ENCODE measurements at regions of chr20 and their contacts with region 1.

Region 1: DNA sequence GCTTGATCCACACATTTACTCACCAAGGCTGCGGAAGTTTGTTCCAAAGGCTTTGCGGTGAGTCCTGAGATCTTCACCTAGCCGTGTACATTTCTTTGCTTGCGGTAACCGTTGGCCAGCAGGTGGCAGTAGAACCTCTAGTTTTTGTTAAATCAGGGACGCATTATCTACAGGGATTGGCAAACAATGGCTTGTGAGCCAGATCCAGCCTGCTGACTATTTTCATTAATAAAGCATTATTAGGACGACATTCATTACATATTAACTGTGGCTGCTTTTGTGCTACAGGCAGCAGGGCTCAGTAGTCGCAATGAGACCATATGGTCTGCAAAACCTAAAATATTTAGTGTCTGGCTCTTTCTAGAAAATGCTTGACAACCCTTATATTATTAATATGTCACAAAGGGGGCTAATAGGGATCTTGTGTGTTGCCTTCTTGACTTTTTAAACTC is 174.1 kb downstream of the DOK5 start:
- DNase-seq: peak; percentile 1
- H3K4me3 ChIP-seq: no peak overlapping the region
- H3K27me3 ChIP-seq: no peaks in the 10 kb centered on the region
- CTCF ChIP-seq: peak; percentile 89

Region 2: GRCh38 chr20:54199721-54200176 is 449.8 kb before region 1 on chr20:
- CTCF ChIA-PET with region 1: interaction called, 12 read pairs
- POLR2A ChIA-PET with region 1: no interaction called
- DNase-seq: no peak
- H3K4me3 ChIP-seq: no peak overlapping the region
- H3K27me3 ChIP-seq: peaks cover under 1% of the 10 kb centered on the region; the same call in 1 of the 2 replicates
- CTCF ChIP-seq: peak; percentile 96

Region 3: DNA sequence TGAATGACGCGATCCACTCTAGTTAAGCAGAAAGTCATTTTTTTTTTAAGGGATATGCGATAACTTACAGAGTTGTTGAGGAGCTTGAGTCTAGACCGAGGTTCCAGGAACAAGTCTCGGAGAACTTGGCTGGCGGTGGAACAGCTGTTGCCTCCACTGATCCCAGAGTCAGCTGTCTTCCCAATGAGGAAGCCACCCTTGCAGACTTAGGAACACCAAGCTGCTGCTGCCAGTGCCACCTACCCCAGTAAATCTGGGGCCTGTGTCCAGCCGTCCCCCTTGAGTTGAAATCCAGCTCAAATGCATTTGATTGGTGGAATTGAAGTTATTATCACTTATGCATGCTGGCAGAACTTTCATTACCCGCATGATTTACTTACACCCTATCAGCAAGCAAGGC is 435.0 kb before region 1 on chr20:
- CTCF ChIA-PET with region 1: interaction called, 20 read pairs
- POLR2A ChIA-PET with region 1: no interaction called
- DNase-seq: no peak
- H3K4me3 ChIP-seq: no peak overlapping the region
- H3K27me3 ChIP-seq: no peaks in the 10 kb centered on the region
- CTCF ChIP-seq: no peak

Region 4: DNA sequence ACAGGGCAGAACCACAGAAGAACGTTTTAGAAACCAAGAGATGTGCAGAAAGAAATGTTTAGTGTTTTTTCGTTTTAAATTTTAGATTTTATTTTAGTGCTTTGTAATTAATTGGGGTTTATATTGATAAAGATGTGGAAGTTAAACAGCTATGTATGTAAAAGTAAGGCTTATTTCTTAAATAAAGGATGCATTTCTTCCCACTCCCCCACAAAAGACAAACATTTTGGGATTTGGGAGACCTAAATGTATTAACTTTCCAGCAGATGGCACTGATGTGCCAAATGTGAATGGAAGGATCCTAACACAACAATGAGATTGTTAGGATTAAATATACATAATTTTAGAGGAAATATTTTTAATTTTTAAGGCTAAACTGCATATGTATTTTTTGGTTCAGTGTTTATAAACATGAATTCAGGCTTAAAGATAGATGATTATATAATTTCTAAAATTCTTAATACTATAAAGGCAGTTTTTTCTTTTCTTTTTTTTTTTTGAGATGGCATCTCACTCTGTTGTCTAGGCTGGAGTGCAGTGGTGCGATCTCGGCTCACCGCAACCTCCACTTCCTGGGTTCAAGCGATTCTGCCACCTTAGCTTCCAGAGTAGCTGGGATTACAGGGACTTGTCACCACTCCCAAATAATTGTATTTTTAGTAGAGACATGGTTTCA is 429.6 kb before region 1 on chr20:
- CTCF ChIA-PET with region 1: interaction called, 35 read pairs
- POLR2A ChIA-PET with region 1: no interaction called
- DNase-seq: no peak
- H3K4me3 ChIP-seq: no peak overlapping the region
- H3K27me3 ChIP-seq: no peaks in the 10 kb centered on the region
- CTCF ChIP-seq: peak; percentile 61